ENCODE measurements at regions of chr11 and their contacts with region 1.

Region 1: GRCh38 chr11:72030472-72031045 is 31.9 kb downstream of the IL18BP start:
- DNase-seq: no peak
- H3K4me3 ChIP-seq: no peak overlapping the region
- H3K27ac ChIP-seq: no peak overlapping the region
- H3K4me1 ChIP-seq: peaks cover under 1% of the 10 kb centered on the region
- H3K27me3 ChIP-seq: no peaks in the 10 kb centered on the region
- CTCF ChIP-seq: no peak

Region 2: DNA sequence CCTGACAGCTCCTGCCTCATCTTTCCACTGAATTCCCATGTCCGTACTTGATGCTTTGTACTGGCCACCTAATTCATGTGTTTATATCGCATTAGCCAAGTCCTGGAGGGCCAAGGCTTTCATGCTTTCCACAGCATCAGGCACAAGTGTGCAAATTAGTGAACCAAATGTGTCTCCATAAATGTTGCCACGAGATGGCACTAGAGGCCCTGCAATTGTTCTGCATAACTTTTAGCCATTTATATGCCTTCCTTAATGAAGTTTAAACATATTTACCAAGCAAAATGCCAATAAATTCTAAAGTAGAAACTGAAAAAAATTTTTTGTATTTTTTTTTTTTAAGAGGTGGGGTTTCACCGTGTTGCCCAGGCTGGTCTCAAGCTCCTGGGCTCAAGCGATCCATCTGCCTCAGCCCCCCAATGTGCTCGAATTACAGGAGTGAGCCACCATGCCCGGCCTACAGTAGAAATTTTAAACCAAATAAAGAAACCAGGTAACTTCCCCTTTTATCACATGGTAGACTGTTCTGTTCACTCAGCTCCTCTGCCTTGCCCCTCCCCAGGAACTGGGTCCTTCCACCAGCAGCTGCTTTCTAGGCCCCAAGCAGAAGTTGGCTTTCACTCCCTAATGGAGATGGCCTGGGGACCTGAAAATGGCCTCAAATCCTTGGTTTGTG is 52.7 kb before region 1 on chr11:
- CTCF ChIA-PET with region 1: interaction called, 17 read pairs
- dilution Hi-C with region 1: no loop called
- in situ Hi-C with region 1: no loop called
- intact Hi-C with region 1: no loop called
- DNase-seq: peak; percentile 33
- H3K4me3 ChIP-seq: no peak overlapping the region
- H3K27ac ChIP-seq: no peak overlapping the region
- H3K4me1 ChIP-seq: no peaks in the 10 kb centered on the region
- H3K27me3 ChIP-seq: no peaks in the 10 kb centered on the region
- CTCF ChIP-seq: peak; percentile 67 to 79

Region 3: GRCh38 chr11:72048766-72049456 is 18.4 kb after region 1 on chr11:
- CTCF ChIA-PET with region 1: no interaction called
- dilution Hi-C with region 1: no loop called
- in situ Hi-C with region 1: no loop called
- intact Hi-C with region 1: no loop called
- DNase-seq: no peak
- H3K4me3 ChIP-seq: no peak overlapping the region
- H3K27ac ChIP-seq: no peak overlapping the region
- H3K4me1 ChIP-seq: no peaks in the 10 kb centered on the region
- H3K27me3 ChIP-seq: no peaks in the 10 kb centered on the region
- CTCF ChIP-seq: no peak

Region 4: DNA sequence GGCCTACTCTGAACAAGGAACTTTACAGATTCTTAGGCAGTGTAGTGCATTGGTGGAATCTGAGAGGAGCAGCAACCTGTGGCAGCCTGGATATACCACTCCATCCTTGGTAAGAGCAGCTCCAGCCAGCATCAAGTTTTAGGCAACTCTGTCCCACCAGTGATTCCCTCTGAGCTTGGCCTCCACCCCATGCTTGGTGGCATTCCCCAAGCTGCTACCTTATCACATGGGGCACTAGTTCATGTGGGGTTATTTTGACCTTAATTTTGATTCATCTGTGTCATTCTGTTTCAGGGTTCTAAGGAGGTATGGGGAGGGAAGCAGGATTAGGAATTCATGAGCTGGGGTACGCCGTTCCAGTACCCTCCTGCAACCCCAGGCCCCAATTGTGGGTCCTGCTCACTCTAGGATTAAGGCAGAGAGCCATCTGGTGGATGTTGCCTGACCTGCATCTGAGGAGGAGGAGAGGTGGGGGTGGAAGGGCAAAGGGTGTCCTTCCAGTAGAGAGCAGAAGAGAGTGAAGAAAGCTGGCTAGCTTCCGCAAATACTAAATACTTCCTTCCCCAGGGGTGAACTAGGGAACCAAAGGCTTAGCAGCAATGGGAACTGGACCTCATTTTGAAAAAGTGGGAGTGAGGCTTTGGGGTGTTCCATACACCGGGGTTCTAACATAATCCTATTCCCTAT is 60.6 kb after region 1 on chr11:
- CTCF ChIA-PET with region 1: interaction called, 6 read pairs
- dilution Hi-C with region 1: no loop called
- in situ Hi-C with region 1: loop called in 1 of 2 experiments (anchors 5 kb)
- intact Hi-C with region 1: loop called (anchors 1 kb)
- DNase-seq: peak; percentile 38
- H3K4me3 ChIP-seq: no peak overlapping the region
- H3K27ac ChIP-seq: no peak overlapping the region
- H3K4me1 ChIP-seq: peaks cover 3% of the 10 kb centered on the region
- H3K27me3 ChIP-seq: no peaks in the 10 kb centered on the region
- CTCF ChIP-seq: peak; percentile 84 to 89

Region 5: DNA sequence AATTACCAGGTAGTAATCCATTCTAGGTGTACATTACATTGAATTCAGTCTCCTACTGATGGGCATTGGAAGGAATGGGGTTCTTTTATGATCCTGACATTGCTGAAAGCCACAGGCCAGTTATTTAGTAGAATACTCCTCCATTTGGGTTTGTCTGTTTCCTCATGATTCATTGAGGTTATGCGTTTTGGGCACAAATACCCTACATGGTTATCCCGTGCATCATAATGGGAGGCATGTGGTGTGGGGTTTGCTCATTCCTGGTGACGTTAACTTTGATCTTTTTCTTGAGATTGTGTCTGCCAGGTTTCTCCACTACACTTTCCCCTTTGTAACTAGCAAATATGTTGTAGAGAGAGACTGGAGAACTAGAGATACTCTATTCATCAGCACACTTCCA is 110.5 kb after region 1 on chr11:
- CTCF ChIA-PET with region 1: interaction called, 9 read pairs
- dilution Hi-C with region 1: no loop called
- in situ Hi-C with region 1: no loop called
- intact Hi-C with region 1: loop called (anchors 1 kb)
- DNase-seq: peak; percentile 92
- H3K4me3 ChIP-seq: no peak overlapping the region
- H3K27ac ChIP-seq: peak overlapping the region; percentile 94
- H3K4me1 ChIP-seq: peaks cover 49% of the 10 kb centered on the region
- H3K27me3 ChIP-seq: no peaks in the 10 kb centered on the region
- CTCF ChIP-seq: no peak

Region 6: GRCh38 chr11:72413914-72414628 is 383.5 kb after region 1 on chr11:
- CTCF ChIA-PET with region 1: no interaction called
- dilution Hi-C with region 1: no loop called
- in situ Hi-C with region 1: loop called in 1 of 2 experiments (anchors 25 kb)
- intact Hi-C with region 1: loop called (anchors 1 kb)
- DNase-seq: peak; percentile 62
- H3K4me3 ChIP-seq: no peak overlapping the region
- H3K27ac ChIP-seq: no peak overlapping the region
- H3K4me1 ChIP-seq: no peaks in the 10 kb centered on the region
- H3K27me3 ChIP-seq: no peaks in the 10 kb centered on the region
- CTCF ChIP-seq: peak; percentile 79 to 94

Region 7: GRCh38 chr11:72430741-72431570 is 400.4 kb after region 1 on chr11:
- CTCF ChIA-PET with region 1: no interaction called
- dilution Hi-C with region 1: no loop called
- in situ Hi-C with region 1: no loop called
- intact Hi-C with region 1: loop called (anchors 1 kb)
- DNase-seq: peak; percentile 30
- H3K4me3 ChIP-seq: no peak overlapping the region
- H3K27ac ChIP-seq: no peak overlapping the region
- H3K4me1 ChIP-seq: peaks cover 16% of the 10 kb centered on the region
- H3K27me3 ChIP-seq: no peaks in the 10 kb centered on the region
- CTCF ChIP-seq: peak; percentile 79 to 81

Region 8: GRCh38 chr11:72541257-72541974 is 510.9 kb after region 1 on chr11:
- CTCF ChIA-PET with region 1: no interaction called
- dilution Hi-C with region 1: no loop called
- in situ Hi-C with region 1: no loop called
- intact Hi-C with region 1: no loop called
- DNase-seq: no peak
- H3K4me3 ChIP-seq: no peak overlapping the region
- H3K27ac ChIP-seq: no peak overlapping the region
- H3K4me1 ChIP-seq: no peaks in the 10 kb centered on the region
- H3K27me3 ChIP-seq: no peaks in the 10 kb centered on the region
- CTCF ChIP-seq: no peak

Measured in mammary epithelial cell (primary cell).